Activated CD4-positive, alpha-beta T cell treated with anti-CD3 and anti-CD28 coated beads for 36 hours (primary cell): ENCODE measurements at regions of chr17 and their contacts with region 1.

Region 1: DNA sequence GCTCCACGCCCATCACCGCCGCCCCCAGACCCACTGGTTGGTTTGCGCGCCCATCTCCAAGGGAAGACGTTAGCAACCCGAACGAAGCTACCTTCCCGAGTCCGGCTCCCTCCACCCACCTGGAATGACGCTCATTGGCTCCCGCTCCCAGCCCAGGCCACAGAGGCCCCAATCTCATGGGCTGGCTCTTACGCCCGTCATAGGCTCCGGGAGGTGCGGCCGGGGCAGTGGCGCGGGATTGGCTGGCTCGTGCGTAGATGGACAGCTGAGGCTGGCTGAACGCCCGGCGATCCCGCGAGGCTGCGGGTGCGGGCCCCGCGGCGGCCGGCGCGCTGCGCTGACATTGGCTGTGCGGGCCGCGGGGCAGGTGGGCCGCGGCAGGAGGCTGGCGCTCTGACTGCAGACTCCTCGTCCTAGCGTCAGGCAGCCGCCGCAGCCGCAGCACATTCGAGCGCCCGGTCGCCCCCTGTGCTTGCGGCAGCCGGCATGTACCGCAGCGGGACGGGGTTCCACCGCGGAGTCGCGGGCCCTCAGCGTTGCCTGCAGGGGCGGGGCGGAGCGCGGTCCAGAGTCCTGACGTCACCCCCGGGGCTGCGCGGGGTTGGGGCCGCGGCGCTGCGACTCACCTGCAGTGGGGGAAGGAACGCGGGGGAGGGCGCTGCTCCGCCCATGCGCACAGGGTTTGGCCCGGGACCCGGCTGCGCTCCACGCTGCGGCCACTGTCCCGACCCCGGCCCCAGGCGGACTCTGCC is 453 bp upstream of the MYH10 start:
- DNase-seq: peak; percentile 96
- ATAC-seq: peak; percentile 98
- H3K4me3 Mint-ChIP-seq: peak overlapping the region; percentile 87
- H3K27ac Mint-ChIP-seq: no peak overlapping the region
- H3K4me1 Mint-ChIP-seq: peaks cover 4% of the 10 kb centered on the region
- H3K27me3 Mint-ChIP-seq: peaks cover 33% of the 10 kb centered on the region

Region 2: GRCh38 chr17:8288336-8289102 is 342.5 kb before region 1 on chr17 and contains the start of gene RANGRF:
- CTCF ChIA-PET with region 1: no interaction called
- POLR2A ChIA-PET with region 1: interaction called, 3 read pairs
- intact Hi-C with region 1: loop called in 1 of 2 experiments (anchors 2 kb)
- DNase-seq: peak; percentile 91
- ATAC-seq: peak; percentile 94
- H3K4me3 Mint-ChIP-seq: peak within 1 kb of the TSS; percentile 84
- H3K27ac Mint-ChIP-seq: peak within 1 kb of the TSS; percentile 93
- H3K4me1 Mint-ChIP-seq: peaks cover 20% of the 10 kb centered on the region
- H3K27me3 Mint-ChIP-seq: no peaks in the 10 kb centered on the region
- total RNA-seq, gene RANGRF: 37.9 to 40.1 TPM

Region 3: GRCh38 chr17:8376271-8377067 is 254.5 kb before region 1 on chr17 and contains the start of gene KRABD2:
- CTCF ChIA-PET with region 1: interaction called, 3 read pairs
- POLR2A ChIA-PET with region 1: interaction called, 3 read pairs
- intact Hi-C with region 1: loop called in 1 of 2 experiments (anchors 1 kb)
- DNase-seq: peak; percentile 95
- ATAC-seq: peak; percentile 99
- H3K4me3 Mint-ChIP-seq: peak within 1 kb of the TSS; percentile 81
- H3K27ac Mint-ChIP-seq: peak within 1 kb of the TSS; percentile 87
- H3K4me1 Mint-ChIP-seq: peaks cover 55% of the 10 kb centered on the region
- H3K27me3 Mint-ChIP-seq: no peaks in the 10 kb centered on the region

Region 4: GRCh38 chr17:8435245-8436168 is 195.5 kb before region 1 on chr17 and contains the start of gene NDEL1:
- CTCF ChIA-PET with region 1: interaction called, 7 read pairs
- POLR2A ChIA-PET with region 1: interaction called, 4 read pairs
- intact Hi-C with region 1: loop called in 1 of 2 experiments (anchors 1 kb)
- DNase-seq: peak; percentile 100
- ATAC-seq: peak; percentile 98
- H3K4me3 Mint-ChIP-seq: peak within 1 kb of the TSS; percentile 87
- H3K27ac Mint-ChIP-seq: peak within 1 kb of the TSS; percentile 91
- H3K4me1 Mint-ChIP-seq: peaks cover 29% of the 10 kb centered on the region
- H3K27me3 Mint-ChIP-seq: no peaks in the 10 kb centered on the region
- total RNA-seq, gene NDEL1: 51.9 to 58.6 TPM

Region 5: DNA sequence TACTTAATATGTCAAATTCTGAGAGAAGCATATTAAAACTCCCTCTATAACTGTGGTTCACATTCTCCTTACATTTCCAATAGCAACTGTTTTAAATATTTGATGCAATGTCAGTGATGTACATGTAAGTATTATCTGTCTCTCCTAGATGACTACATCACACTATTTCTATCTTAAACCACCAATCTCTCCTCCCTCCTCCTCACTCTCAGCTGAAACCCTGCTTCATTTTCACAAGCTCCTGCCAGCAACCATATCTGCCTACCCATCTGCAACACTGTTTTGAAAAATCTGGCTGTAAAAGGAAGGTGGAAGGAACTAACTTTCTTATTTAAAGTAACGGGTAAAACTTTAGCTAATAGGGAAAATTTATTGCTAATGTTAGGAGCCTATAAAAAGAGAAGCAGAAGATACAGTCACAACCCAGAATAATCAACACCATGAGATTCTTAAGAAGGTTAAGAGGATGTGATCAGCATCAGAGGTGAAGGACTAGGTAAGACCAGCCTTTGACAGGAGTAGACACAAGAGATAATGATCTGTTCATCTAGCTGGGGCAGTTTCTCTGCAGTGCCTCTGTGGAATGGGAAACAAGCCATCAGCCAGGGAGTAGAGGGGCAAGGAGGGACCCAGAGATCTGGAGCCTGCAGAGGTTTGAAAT is 31.5 kb before region 1 on chr17:
- CTCF ChIA-PET with region 1: no interaction called
- POLR2A ChIA-PET with region 1: no interaction called
- intact Hi-C with region 1: loop called in 1 of 2 experiments (anchors 1 kb)
- DNase-seq: no peak
- ATAC-seq: peak; percentile 63
- H3K4me3 Mint-ChIP-seq: no peak overlapping the region
- H3K27ac Mint-ChIP-seq: no peak overlapping the region
- H3K4me1 Mint-ChIP-seq: peaks cover 4% of the 10 kb centered on the region
- H3K27me3 Mint-ChIP-seq: no peaks in the 10 kb centered on the region

Region 6: GRCh38 chr17:8745586-8746500 is 114.9 kb after region 1 on chr17:
- CTCF ChIA-PET with region 1: no interaction called
- POLR2A ChIA-PET with region 1: no interaction called
- intact Hi-C with region 1: loop called (anchors 1 to 5 kb)
- DNase-seq: peak; percentile 87
- ATAC-seq: peak; percentile 83
- H3K4me3 Mint-ChIP-seq: peak overlapping the region; percentile 77
- H3K27ac Mint-ChIP-seq: peak overlapping the region; percentile 79
- H3K4me1 Mint-ChIP-seq: peaks cover 3% of the 10 kb centered on the region
- H3K27me3 Mint-ChIP-seq: no peaks in the 10 kb centered on the region

Region 7: DNA sequence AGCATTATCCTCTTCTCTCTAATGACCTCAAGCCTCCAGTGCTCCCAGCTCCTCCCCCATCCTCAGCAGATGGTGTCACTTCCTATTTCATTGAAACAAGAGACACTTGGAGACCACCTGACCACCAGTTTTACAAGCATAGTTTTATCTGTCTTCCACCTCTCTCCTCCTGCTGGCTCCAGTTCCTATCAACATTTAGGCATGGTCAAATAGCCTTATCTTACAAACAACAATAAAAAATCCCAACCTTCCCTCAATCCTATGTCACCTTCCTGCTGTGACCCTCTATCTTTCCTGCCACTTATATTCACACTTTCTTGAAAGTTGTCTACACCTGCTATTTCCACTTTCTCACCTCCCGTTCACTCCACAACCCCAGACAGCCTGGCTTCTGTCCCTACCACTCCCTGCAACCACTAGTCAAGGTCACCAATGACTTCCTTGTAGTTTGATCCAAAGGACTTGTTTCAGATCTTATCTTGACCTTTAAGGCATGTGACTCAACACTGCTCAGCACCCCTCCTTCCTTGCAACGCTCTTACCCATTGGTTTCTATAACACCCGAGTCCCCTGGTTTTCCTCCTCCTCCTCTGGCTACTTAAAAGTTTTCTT is 386.1 kb after region 1 on chr17:
- CTCF ChIA-PET with region 1: no interaction called
- POLR2A ChIA-PET with region 1: no interaction called
- intact Hi-C with region 1: no loop called
- DNase-seq: no peak
- ATAC-seq: no peak
- H3K4me3 Mint-ChIP-seq: no peak overlapping the region
- H3K27ac Mint-ChIP-seq: no peak overlapping the region
- H3K4me1 Mint-ChIP-seq: no peaks in the 10 kb centered on the region
- H3K27me3 Mint-ChIP-seq: peaks cover 37% of the 10 kb centered on the region